OCI-LY7 (cell line): ENCODE measurements at regions of chr2 and their contacts with region 1.

Region 1: DNA sequence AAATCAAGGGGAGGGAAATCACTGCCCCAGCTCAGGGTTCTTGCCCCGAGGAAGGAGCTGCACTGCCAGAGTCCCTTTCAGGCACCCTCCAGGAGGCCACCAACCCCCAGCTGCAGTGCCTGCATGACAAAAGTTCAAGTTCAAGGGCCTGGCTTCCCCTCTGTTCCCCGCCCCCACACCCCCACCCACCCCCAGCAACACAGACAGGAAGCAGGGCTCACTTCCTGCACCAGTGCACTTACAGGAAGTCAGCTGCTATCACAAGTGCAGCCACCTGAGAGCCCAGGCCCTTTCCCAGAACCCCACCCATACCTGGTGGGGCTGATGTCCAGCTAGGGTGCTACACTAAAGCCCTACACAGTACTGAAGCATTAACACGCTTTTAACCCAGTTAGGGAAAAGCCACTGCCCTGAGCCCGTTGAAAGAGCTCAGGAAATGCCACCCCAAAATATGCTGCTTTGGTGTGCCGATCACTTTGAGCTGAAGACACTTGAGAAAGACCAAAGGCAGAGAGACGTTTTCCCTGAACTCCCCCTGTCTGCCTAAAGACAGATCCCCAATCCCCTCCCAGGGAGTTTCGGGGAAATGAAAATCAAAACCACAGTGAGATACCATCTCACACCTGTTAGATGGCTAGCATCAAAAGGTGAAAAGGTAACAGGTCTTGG is 109.9 kb upstream of the CAB39 start:
- DNase-seq: peak; percentile 94
- H3K4me3 ChIP-seq: peak overlapping the region; percentile 48
- H3K27ac ChIP-seq: peak overlapping the region; percentile 79
- H3K4me1 ChIP-seq: peaks cover 66% of the 10 kb centered on the region
- CTCF ChIP-seq: no peak

Region 2: GRCh38 chr2:230326453-230327417 is 276.0 kb before region 1 on chr2 and contains the start of gene SP140L:
- CTCF ChIA-PET with region 1: no interaction called
- POLR2A ChIA-PET with region 1: interaction called, 7 read pairs
- intact Hi-C with region 1: loop called (anchors 2 kb)
- DNase-seq: peak; percentile 84
- H3K4me3 ChIP-seq: peak within 1 kb of the TSS; percentile 69
- H3K27ac ChIP-seq: peak within 1 kb of the TSS; percentile 75
- H3K4me1 ChIP-seq: peaks cover 29% of the 10 kb centered on the region
- CTCF ChIP-seq: no peak
- total RNA-seq, gene SP140L: 7.5 and 10.4 TPM in 2 replicates

Region 3: GRCh38 chr2:230416061-230416721 is 186.5 kb before region 1 on chr2 and contains the start of gene SP100:
- CTCF ChIA-PET with region 1: no interaction called
- POLR2A ChIA-PET with region 1: interaction called, 3 read pairs
- intact Hi-C with region 1: loop called (anchors 2 kb)
- DNase-seq: peak; percentile 91
- H3K4me3 ChIP-seq: peak within 1 kb of the TSS; percentile 72
- H3K27ac ChIP-seq: peak within 1 kb of the TSS; percentile 91
- H3K4me1 ChIP-seq: peaks cover 44% of the 10 kb centered on the region
- CTCF ChIP-seq: no peak
- total RNA-seq, gene SP100: 44.6 and 60.5 TPM in 2 replicates

Region 4: GRCh38 chr2:230441227-230441897 is 161.3 kb before region 1 on chr2:
- CTCF ChIA-PET with region 1: no interaction called
- POLR2A ChIA-PET with region 1: no interaction called
- intact Hi-C with region 1: loop called (anchors 10 kb)
- DNase-seq: peak; percentile 15
- H3K4me3 ChIP-seq: no peak overlapping the region
- H3K27ac ChIP-seq: no peak overlapping the region
- H3K4me1 ChIP-seq: peaks cover 13% of the 10 kb centered on the region
- CTCF ChIP-seq: no peak

Region 5: GRCh38 chr2:230564805-230565779 is 37.6 kb before region 1 on chr2:
- CTCF ChIA-PET with region 1: no interaction called
- POLR2A ChIA-PET with region 1: no interaction called
- intact Hi-C with region 1: loop called (anchors 2 kb)
- DNase-seq: peak; percentile 73
- H3K4me3 ChIP-seq: no peak overlapping the region
- H3K27ac ChIP-seq: peak overlapping the region; percentile 17
- H3K4me1 ChIP-seq: peaks cover 13% of the 10 kb centered on the region
- CTCF ChIP-seq: no peak

Region 6: GRCh38 chr2:231854671-231855070 is 1252.0 kb after region 1 on chr2:
- CTCF ChIA-PET with region 1: no interaction called
- POLR2A ChIA-PET with region 1: no interaction called
- intact Hi-C with region 1: no loop called
- DNase-seq: no peak
- H3K4me3 ChIP-seq: no peak overlapping the region
- H3K27ac ChIP-seq: no peak overlapping the region
- H3K4me1 ChIP-seq: no peaks in the 10 kb centered on the region
- CTCF ChIP-seq: no peak